CD4-positive, alpha-beta T cell (primary cell): ENCODE measurements at regions of chr7 and their contacts with region 1.

Region 1: DNA sequence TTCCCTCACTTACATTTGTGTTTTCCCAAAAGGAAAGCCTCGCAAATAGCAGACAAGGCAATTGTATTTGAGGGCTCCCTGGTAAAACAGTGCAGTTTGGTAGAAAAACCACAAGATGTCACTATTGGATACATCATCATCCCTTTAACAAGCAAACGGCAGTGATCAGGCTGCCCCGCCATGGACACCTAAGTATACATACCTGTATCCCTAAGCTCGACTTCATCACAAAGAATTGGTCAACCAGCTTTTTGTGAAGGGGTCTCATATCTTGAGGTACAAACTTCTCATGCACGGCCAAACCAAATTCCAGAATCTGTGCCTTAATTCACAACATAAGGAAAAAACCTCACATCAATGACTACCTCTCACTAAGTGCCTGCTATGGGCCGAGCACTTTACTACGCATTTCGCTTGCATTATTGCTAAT is 179.5 kb upstream of the IMMP2L start:
- DNase-seq: peak in 13 of 14 experiments; percentile 4 to 72 (median 24)
- ATAC-seq: peak; percentile 86
- H3K4me3 ChIP-seq: no peak overlapping the region
- H3K4me3 Mint-ChIP-seq: no peak overlapping the region
- H3K27ac ChIP-seq: no peak overlapping the region
- H3K27ac Mint-ChIP-seq: no peak overlapping the region
- H3K4me1 ChIP-seq: no peaks in the 10 kb centered on the region
- H3K4me1 Mint-ChIP-seq: no peaks in the 10 kb centered on the region
- H3K27me3 ChIP-seq: no peaks in the 10 kb centered on the region
- H3K27me3 Mint-ChIP-seq: peaks cover 4% of the 10 kb centered on the region
- CTCF ChIP-seq: peak; percentile 73

Region 2: DNA sequence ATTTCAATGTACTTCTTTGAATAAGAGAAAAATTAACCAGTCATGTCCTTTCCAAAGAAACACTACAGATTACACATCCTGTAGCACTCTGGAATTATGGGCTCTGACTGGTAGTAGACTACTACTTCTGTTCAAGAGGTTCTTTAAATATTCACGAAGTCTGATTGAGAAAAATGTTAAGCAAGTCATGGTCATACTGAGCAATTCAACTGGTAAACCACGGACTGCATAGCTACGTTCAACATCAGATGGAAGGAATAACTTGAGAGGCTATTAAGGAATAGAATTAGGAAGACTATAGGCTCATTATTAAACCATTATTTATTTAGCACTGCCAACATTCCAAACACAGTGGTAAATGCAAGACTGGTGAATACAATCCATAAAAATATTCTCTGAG is 340.3 kb before region 1 on chr7:
- CTCF ChIA-PET with region 1: no interaction called
- POLR2A ChIA-PET with region 1: no interaction called
- intact Hi-C with region 1: no loop called
- DNase-seq: no peak
- ATAC-seq: no peak
- H3K4me3 ChIP-seq: no peak overlapping the region
- H3K4me3 Mint-ChIP-seq: no peak overlapping the region
- H3K27ac ChIP-seq: no peak overlapping the region
- H3K27ac Mint-ChIP-seq: no peak overlapping the region
- H3K4me1 ChIP-seq: no peaks in the 10 kb centered on the region
- H3K4me1 Mint-ChIP-seq: no peaks in the 10 kb centered on the region
- H3K27me3 ChIP-seq: no peaks in the 10 kb centered on the region
- H3K27me3 Mint-ChIP-seq: no peaks in the 10 kb centered on the region
- CTCF ChIP-seq: no peak

Region 3: DNA sequence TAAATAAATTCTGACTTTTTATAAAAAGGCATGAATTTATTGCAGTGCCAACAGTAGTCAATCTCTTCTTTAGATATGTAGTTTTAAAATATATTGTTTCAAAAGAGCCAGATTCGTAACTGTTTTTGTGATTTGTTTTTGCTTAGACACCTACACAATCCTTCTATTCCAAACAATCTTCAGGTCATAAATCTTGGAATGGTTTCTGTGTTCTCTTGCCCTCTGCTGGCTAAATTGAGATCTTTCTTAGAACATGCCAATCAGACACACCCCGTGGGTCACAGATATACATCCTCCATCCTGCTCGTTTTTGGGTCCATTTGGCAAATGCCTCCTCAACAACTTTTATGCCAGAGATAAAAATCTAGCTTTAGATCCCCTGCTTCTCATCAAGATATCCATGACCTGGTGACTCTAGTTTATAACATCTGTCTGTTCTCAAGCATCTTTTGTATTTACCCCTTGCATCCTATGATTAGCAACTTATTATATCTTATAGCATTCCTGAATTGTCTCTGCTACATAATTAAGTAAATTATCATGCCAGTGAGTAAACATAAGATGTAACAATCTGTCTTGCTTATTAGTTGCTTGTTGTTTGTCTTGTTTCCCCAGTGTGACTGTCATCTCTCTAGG is 673.1 kb after region 1 on chr7:
- CTCF ChIA-PET with region 1: no interaction called
- POLR2A ChIA-PET with region 1: no interaction called
- intact Hi-C with region 1: loop called (anchors 2 to 5 kb)
- DNase-seq: peak in 4 of 14 experiments; percentile 15 to 40 (median 35)
- ATAC-seq: no peak
- H3K4me3 ChIP-seq: no peak overlapping the region
- H3K4me3 Mint-ChIP-seq: no peak overlapping the region
- H3K27ac ChIP-seq: no peak overlapping the region
- H3K27ac Mint-ChIP-seq: no peak overlapping the region
- H3K4me1 ChIP-seq: no peaks in the 10 kb centered on the region
- H3K4me1 Mint-ChIP-seq: no peaks in the 10 kb centered on the region
- H3K27me3 ChIP-seq: no peaks in the 10 kb centered on the region
- H3K27me3 Mint-ChIP-seq: no peaks in the 10 kb centered on the region
- CTCF ChIP-seq: peak; percentile 53

Region 4: DNA sequence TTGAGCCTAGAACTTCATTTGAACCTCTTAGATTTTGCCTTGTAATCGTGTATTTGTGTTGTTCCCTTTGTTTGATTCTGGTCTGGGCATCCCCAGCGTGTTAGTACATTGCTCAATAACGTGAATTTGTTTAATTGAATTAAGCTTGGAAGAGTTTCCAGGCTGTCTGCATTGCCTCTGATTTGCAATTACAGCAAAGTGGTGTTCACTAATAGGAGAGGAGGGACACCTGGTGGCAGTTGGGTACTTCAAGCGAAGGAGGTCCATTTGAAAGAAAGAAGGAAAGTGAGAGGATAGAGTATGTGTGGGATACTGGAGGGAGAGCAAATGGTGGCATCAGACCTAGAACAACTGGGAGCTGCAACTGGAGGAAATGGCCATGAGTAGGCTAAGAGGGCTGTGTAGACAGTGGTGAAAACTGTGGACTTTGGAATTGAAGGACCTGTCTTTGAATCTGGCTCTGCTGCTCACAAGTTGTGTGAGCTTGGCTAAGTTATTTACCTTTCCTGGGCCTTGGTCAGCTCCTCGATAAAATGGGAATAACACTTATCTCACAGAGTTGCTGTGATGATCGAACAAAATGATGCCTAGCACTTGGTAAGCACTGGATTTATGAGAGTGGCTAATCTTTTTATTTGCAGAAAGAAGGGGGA is 754.1 kb after region 1 on chr7:
- CTCF ChIA-PET with region 1: no interaction called
- POLR2A ChIA-PET with region 1: no interaction called
- intact Hi-C with region 1: loop called (anchors 1 to 2 kb)
- DNase-seq: peak in 11 of 14 experiments; percentile 9 to 60 (median 29)
- ATAC-seq: no peak
- H3K4me3 ChIP-seq: no peak overlapping the region
- H3K4me3 Mint-ChIP-seq: no peak overlapping the region
- H3K27ac ChIP-seq: no peak overlapping the region
- H3K27ac Mint-ChIP-seq: no peak overlapping the region
- H3K4me1 ChIP-seq: no peaks in the 10 kb centered on the region
- H3K4me1 Mint-ChIP-seq: no peaks in the 10 kb centered on the region
- H3K27me3 ChIP-seq: no peaks in the 10 kb centered on the region
- H3K27me3 Mint-ChIP-seq: peaks cover 5% of the 10 kb centered on the region
- CTCF ChIP-seq: peak; percentile 60

Region 5: DNA sequence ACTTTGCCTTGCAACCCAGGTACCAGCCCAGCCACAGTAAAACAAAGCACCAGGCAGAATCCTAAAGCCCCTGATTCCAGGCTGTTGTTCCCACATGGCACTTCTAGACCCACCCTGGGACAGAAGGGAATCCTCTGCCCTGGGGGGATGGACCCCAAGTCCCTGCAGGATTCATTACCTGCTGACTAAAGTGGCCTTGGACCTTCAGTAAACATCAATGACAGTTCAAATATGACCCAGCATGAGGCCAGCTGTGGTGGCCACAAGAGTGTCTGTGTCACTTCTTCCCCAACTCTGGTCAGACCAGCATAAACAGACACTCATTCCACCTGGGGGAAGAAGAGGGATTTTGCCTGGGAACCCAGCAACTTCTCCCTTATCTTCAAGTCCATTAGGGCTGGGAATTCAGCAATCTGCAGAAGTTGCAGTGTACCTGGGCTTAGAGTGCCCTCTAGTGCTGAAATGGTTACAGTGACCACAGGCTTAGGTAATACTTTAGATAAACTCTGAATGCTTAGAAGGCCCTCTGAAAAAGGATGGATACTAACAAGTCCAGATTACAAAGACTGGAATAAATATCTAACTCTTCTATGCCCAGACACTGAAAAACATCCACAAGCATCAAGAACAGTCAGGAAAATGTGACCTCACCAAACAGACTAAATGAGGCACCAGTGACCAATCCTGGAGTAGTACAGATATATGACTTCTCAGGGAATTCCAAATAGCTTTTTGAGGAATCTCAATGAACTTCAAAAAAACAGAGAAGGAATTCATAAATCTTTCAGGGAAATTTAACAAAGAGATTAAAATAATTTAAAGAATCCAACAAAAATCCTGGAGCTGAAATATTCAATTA is 1156.8 kb after region 1 on chr7:
- CTCF ChIA-PET with region 1: no interaction called
- POLR2A ChIA-PET with region 1: no interaction called
- intact Hi-C with region 1: loop called in 1 of 2 experiments (anchors 10 kb)
- DNase-seq: peak in 8 of 14 experiments; percentile 6 to 62 (median 28)
- ATAC-seq: peak; percentile 39
- H3K4me3 ChIP-seq: no peak overlapping the region
- H3K4me3 Mint-ChIP-seq: no peak overlapping the region
- H3K27ac ChIP-seq: no peak overlapping the region
- H3K27ac Mint-ChIP-seq: no peak overlapping the region
- H3K4me1 ChIP-seq: peaks cover 3% of the 10 kb centered on the region
- H3K4me1 Mint-ChIP-seq: peaks cover 18% of the 10 kb centered on the region
- H3K27me3 ChIP-seq: no peaks in the 10 kb centered on the region
- H3K27me3 Mint-ChIP-seq: no peaks in the 10 kb centered on the region
- CTCF ChIP-seq: peak; percentile 51

Region 6: DNA sequence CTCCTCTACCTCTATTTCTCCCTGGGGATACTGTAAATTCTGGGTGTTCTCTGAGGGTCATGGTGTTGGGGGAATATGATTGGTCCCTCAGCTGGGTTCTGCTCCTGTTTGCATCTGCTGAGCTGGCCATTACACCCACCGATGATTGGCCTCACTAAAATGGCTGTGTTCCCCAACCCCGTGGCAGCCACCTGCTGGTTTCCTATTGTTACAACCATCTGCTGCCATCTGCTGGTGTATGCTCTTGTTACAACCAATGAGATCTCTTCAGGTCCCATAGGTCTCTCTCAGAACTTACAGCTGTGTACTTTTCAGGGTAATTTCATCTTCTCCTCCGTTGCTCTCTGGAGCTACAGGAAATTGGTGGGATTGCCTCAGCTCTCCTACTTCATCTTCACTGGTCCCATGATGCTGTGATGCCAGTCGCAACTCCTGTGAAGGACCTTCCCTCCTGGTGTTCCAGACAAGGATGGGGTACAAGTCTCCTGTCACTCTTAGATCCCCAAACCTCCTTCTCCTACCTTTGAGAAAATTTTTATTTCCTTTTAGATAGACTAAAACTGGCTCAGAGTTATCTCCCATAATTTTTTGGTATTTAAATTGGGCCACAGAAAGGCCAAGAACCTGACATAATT is 1680.0 kb after region 1 on chr7:
- CTCF ChIA-PET with region 1: no interaction called
- POLR2A ChIA-PET with region 1: no interaction called
- intact Hi-C with region 1: loop called (anchors 1 to 2 kb)
- DNase-seq: peak; percentile 43 to 83 (median 60)
- ATAC-seq: peak; percentile 95
- H3K4me3 ChIP-seq: no peak overlapping the region
- H3K4me3 Mint-ChIP-seq: no peak overlapping the region
- H3K27ac ChIP-seq: no peak overlapping the region
- H3K27ac Mint-ChIP-seq: no peak overlapping the region
- H3K4me1 ChIP-seq: peaks cover 3% of the 10 kb centered on the region
- H3K4me1 Mint-ChIP-seq: no peaks in the 10 kb centered on the region
- H3K27me3 ChIP-seq: no peaks in the 10 kb centered on the region
- H3K27me3 Mint-ChIP-seq: no peaks in the 10 kb centered on the region
- CTCF ChIP-seq: peak; percentile 95

Region 7: DNA sequence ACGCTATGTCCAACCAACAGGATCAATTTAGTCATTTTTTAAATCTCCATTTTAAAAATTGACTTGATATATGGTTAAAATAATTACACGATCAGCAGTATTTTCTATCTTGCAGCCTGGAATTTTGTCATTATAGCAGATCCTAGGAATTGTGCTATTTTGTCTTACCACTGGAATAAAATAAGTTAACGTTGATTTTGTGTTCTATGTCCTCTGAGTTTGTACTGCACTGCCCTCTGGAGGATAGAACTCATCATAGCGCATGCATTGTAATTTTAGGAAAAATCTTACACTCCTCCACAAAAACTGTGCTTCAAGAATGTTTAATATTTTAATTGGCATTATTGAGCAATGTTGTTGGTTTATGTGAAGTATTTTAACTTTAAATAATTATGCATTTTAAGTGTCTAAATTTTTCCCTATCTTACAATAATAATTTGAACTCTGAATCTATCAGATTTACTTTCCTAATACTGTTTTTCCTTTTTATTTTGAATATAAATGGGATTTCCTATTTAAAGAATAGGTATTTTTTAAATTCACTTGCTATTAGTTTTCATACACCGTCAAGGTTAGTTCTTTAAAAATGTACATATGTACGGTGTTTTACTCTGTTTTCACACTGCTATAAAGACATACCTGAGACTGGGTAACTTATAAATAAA is 1956.9 kb after region 1 on chr7:
- CTCF ChIA-PET with region 1: no interaction called
- POLR2A ChIA-PET with region 1: no interaction called
- intact Hi-C with region 1: loop called in 1 of 2 experiments (anchors 5 kb)
- DNase-seq: no peak
- ATAC-seq: no peak
- H3K4me3 ChIP-seq: no peak overlapping the region
- H3K4me3 Mint-ChIP-seq: no peak overlapping the region
- H3K27ac ChIP-seq: no peak overlapping the region
- H3K27ac Mint-ChIP-seq: no peak overlapping the region
- H3K4me1 ChIP-seq: no peaks in the 10 kb centered on the region
- H3K4me1 Mint-ChIP-seq: no peaks in the 10 kb centered on the region
- H3K27me3 ChIP-seq: no peaks in the 10 kb centered on the region
- H3K27me3 Mint-ChIP-seq: no peaks in the 10 kb centered on the region
- CTCF ChIP-seq: no peak

Region 8: GRCh38 chr7:113710310-113711106 is 1968.7 kb after region 1 on chr7:
- CTCF ChIA-PET with region 1: no interaction called
- POLR2A ChIA-PET with region 1: no interaction called
- intact Hi-C with region 1: loop called in 1 of 2 experiments (anchors 5 kb)
- DNase-seq: peak in 8 of 14 experiments; percentile 2 to 74 (median 32)
- ATAC-seq: peak; percentile 57
- H3K4me3 ChIP-seq: no peak overlapping the region
- H3K4me3 Mint-ChIP-seq: no peak overlapping the region
- H3K27ac ChIP-seq: no peak overlapping the region
- H3K27ac Mint-ChIP-seq: no peak overlapping the region
- H3K4me1 ChIP-seq: no peaks in the 10 kb centered on the region
- H3K4me1 Mint-ChIP-seq: no peaks in the 10 kb centered on the region
- H3K27me3 ChIP-seq: no peaks in the 10 kb centered on the region
- H3K27me3 Mint-ChIP-seq: no peaks in the 10 kb centered on the region
- CTCF ChIP-seq: peak; percentile 99